Dorsolateral prefrontal cortex (tissue), 120 donors: ENCODE measurements at regions of chrX and their contacts with region 1.

Region 1: DNA sequence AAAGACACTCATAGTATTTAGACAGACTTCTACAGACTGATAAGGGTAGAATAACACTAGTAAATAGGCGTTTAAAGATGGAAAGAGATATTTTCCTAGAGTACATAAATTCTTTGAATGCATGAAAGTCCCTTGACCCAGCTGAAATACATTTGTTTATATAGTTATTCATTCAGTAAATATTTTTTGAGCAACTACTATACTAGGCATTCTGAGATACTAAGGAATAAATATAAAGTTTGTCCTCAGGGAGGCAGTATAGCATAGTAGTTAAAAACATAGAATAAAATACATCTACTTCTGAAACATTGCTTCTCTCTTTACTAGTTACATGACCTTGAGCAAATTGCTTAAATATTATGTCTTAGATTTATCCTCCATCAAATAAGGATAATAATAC is 27.4 kb downstream of the HMGN5 start:
- DNase-seq: no peak
- H3K4me3 ChIP-seq: no peak overlapping the region
- H3K27ac ChIP-seq: no peak overlapping the region
- H3K27me3 ChIP-seq: peaks cover 0 to 41% (median 0%) of the 10 kb centered on the region in 45 donors
- CTCF ChIP-seq: peak in 51 of 56 donors; percentile 23 to 72 (median 48)

Region 2: DNA sequence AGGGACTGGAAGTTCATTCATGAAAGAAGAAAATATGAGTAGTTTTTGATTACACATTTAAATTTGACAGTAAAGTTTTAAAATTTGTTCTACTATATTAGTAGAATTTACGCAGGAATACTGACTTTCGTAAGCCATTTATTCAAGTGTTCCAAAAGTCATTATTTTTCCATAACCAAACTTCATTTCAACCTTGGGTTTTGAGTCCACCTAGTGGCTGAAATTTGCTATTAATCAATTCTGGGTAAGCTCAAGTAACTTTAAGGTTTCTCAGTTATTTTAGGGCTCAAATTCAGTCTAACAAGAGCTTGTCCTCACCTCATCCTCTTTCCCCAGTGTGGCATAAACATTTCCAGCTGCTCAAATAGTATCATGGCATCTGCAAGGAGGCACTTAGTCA is 203.0 kb after region 1 on chrX:
- intact Hi-C with region 1: loop called in 1 of 2 experiments (anchors 10 kb)
- DNase-seq: no peak
- H3K4me3 ChIP-seq: no peak overlapping the region
- H3K27ac ChIP-seq: no peak overlapping the region
- H3K27me3 ChIP-seq: peaks cover 0 to 39% (median 4%) of the 10 kb centered on the region in 45 donors
- CTCF ChIP-seq: peak; percentile 30 to 74 (median 58)